ENCODE measurements at regions of chr16 and their contacts with region 1.

Region 1: DNA sequence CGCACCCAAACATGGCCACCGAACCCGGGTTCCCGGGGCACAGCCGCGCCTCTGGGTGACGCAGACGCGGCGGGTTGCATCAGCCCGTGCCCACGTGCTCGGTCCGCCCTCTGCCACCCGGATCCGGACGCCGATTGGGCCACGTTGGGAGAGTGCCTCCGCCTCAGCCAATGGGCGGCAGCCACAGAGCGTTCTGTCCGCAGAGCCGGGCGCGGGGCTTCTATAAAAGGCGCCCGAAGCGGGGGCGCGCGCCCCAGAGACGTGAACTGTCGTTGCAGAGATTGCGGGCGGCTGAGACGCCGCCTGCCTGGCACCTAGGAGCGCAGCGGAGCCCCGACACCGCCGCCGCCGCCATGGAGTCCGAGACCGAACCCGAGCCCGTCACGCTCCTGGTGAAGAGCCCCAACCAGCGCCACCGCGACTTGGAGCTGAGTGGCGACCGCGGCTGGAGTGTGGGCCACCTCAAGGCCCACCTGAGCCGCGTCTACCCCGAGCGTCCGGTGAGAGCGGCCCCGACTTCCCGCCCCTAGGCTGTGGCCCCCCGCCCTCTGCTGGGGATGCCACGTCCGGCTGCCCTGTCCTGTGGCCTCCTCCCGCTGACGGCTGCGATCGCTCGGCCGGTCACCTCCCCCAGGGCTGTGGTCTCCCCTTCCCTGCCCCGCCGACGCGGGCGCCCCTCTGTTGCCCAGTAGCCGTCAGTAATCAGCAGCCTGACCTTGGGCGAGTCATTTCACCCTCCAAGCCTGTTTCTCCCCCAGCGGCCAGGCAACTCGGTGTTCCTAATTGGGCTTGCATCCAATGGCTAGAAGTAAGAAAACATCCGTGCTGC is at the start of gene HERPUD1:
- DNase-seq: peak; percentile 98
- H3K4me3 ChIP-seq: peak within 1 kb of the TSS; percentile 66 to 94 (median 85)
- H3K27ac ChIP-seq: peak within 1 kb of the TSS; percentile 80
- H3K4me1 ChIP-seq: peaks cover 26% of the 10 kb centered on the region
- H3K27me3 ChIP-seq: no peaks in the 10 kb centered on the region
- CTCF ChIP-seq: no peak
- POLR2A ChIP-seq: peak; percentile 99
- total RNA-seq, gene HERPUD1: 101 and 109 TPM in 2 replicates

Region 2: DNA sequence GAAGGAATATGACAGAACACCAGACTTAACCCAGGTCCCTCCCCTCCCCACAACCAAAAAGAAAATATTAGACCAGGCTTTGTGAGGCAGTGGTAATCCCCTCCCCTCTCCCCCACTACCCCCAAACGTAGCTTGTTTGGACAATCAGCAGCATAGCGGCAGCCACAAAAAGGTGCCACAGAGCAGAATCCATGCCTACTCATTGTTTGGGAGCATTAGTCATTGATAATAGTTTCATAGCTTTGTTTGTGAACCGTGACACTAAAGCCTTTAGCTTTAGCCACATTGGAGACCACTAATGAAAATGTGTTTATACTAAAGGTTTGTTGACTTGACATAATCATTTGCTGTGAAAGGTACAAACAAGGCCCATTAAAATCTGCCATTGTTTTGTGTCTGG is 137.1 kb before region 1 on chr16:
- CTCF ChIA-PET with region 1: interaction called, 18 read pairs
- POLR2A ChIA-PET with region 1: no interaction called
- dilution Hi-C with region 1: no loop called
- intact Hi-C with region 1: loop called (anchors 1 kb)
- DNase-seq: peak; percentile 30
- H3K4me3 ChIP-seq: no peak overlapping the region
- H3K27ac ChIP-seq: peak overlapping the region; percentile 36
- H3K4me1 ChIP-seq: peaks cover 4% of the 10 kb centered on the region
- H3K27me3 ChIP-seq: no peaks in the 10 kb centered on the region
- CTCF ChIP-seq: no peak
- POLR2A ChIP-seq: no peak

Region 3: GRCh38 chr16:56915336-56916119 is 16.6 kb before region 1 on chr16:
- CTCF ChIA-PET with region 1: interaction called, 7 read pairs
- POLR2A ChIA-PET with region 1: interaction called, 7 read pairs
- dilution Hi-C with region 1: no loop called
- intact Hi-C with region 1: loop called (anchors 1 kb)
- DNase-seq: peak; percentile 91
- H3K4me3 ChIP-seq: no peak overlapping the region
- H3K27ac ChIP-seq: peak overlapping the region; percentile 23
- H3K4me1 ChIP-seq: peaks cover 17% of the 10 kb centered on the region
- H3K27me3 ChIP-seq: peaks cover 5 to 12% of the 10 kb centered on the region in 2 experiments
- CTCF ChIP-seq: no peak
- POLR2A ChIP-seq: no peak

Measured in endothelial cell of umbilical vein (primary cell).